H1 (cell line): ENCODE measurements at regions of chr2 and their contacts with region 1.

Region 1: GRCh38 chr2:127415593-127416505 is 2.4 kb upstream of the PROC start:
- DNase-seq: peak in 1 of 2 experiments; percentile 96
- H3K4me3 ChIP-seq: peak overlapping the region; percentile 13 to 58 (median 40); a peak in 7 of 8 replicates
- H3K27ac ChIP-seq: no peak overlapping the region
- H3K4me1 ChIP-seq: peaks cover 0 to 6% (median 0%) of the 10 kb centered on the region in 4 experiments; a peak in 2 of 7 replicates
- H3K27me3 ChIP-seq: peaks cover 1 to 33% (median 20%) of the 10 kb centered on the region in 4 experiments
- CTCF ChIP-seq: peak in 2 of 3 experiments; percentile 80 to 87; a peak in 3 of 4 replicates
- EP300 ChIP-seq: no peak
- POLR2A ChIP-seq: no peak
- RAD21 ChIP-seq: peak; percentile 72 to 76

Region 2: GRCh38 chr2:126678269-126679065 is 737.4 kb before region 1 on chr2:
- CTCF ChIA-PET with region 1: no interaction called
- POLR2A ChIA-PET with region 1: no interaction called
- DNase-seq: no peak
- H3K4me3 ChIP-seq: no peak overlapping the region
- H3K27ac ChIP-seq: no peak overlapping the region
- H3K4me1 ChIP-seq: no peaks in the 10 kb centered on the region
- H3K27me3 ChIP-seq: no peaks in the 10 kb centered on the region
- CTCF ChIP-seq: no peak
- EP300 ChIP-seq: no peak
- POLR2A ChIP-seq: no peak
- RAD21 ChIP-seq: no peak

Region 3: GRCh38 chr2:127072970-127073369 is 342.9 kb before region 1 on chr2:
- CTCF ChIA-PET with region 1: no interaction called
- POLR2A ChIA-PET with region 1: no interaction called
- DNase-seq: no peak
- H3K4me3 ChIP-seq: no peak overlapping the region
- H3K27ac ChIP-seq: no peak overlapping the region
- H3K4me1 ChIP-seq: no peaks in the 10 kb centered on the region; a peak in 2 of 7 replicates
- H3K27me3 ChIP-seq: no peaks in the 10 kb centered on the region
- CTCF ChIP-seq: no peak
- EP300 ChIP-seq: no peak
- POLR2A ChIP-seq: no peak
- RAD21 ChIP-seq: no peak

Region 4: DNA sequence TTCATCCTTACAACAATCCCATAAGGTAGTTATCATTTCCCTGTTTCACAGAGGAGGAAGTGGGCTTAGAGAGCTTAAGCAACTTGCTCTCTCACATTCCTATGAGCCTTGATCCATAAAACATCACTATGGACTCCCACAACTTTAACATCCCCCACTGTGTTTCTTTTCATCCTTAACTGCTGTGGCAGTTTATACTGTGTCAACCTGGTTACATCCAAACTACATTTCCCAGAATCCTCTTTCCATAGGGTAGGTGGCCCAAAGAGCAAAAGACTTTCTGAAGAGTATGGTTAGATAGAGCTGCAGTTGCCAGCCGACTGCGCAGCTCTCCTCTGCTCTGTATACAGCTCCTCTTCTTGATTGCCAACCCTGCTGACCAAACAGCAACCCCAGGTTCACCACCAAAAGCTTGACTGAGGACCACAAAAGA is 50.6 kb before region 1 on chr2:
- CTCF ChIA-PET with region 1: interaction called, 10 read pairs
- POLR2A ChIA-PET with region 1: no interaction called
- DNase-seq: no peak
- H3K4me3 ChIP-seq: no peak overlapping the region
- H3K27ac ChIP-seq: no peak overlapping the region
- H3K4me1 ChIP-seq: peaks cover 0 to 9% (median 5%) of the 10 kb centered on the region in 4 experiments; a peak in 4 of 7 replicates
- H3K27me3 ChIP-seq: no peaks in the 10 kb centered on the region
- CTCF ChIP-seq: no peak
- EP300 ChIP-seq: no peak
- POLR2A ChIP-seq: no peak
- RAD21 ChIP-seq: no peak

Region 5: DNA sequence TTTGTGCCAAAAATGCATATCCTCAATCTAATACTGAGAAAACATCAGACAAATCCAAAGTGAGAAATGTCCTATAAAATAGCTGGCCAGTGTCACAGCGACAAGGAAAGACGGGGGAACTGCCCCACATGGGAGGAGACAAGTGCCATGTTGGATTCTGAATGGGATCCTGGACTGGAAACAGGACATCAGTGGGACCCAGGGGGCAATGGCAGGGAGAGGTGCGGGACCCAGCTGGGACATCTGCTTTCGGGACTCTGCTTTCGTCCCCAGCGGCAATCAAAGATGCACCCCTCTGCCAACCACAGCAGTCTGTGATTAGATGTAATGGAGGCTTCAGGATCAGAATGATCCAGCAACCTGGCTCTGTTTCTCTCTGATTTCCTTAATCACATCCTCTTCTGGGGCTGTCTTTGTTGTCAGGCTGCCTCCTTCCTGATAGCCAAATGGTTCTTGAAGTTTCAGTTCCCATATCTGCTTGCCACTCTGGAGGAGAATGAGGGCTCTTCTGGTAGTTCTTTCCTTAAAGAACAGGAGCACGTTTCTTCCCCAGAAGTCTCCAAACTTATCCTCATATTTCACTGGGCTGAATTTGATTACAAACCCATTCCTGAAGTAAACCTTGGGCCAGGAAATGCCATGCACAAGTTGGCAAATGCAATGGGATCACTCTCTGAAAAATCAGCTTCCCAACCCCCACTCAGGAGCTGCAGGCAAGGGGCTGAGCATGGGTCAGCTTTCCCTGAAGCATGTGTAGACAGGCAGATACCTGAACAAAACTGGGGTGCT is 11.2 kb before region 1 on chr2:
- CTCF ChIA-PET with region 1: interaction called, 60 read pairs
- POLR2A ChIA-PET with region 1: interaction called, 4 read pairs
- DNase-seq: no peak
- H3K4me3 ChIP-seq: no peak overlapping the region
- H3K27ac ChIP-seq: no peak overlapping the region
- H3K4me1 ChIP-seq: peaks cover 0 to 8% (median 4%) of the 10 kb centered on the region in 4 experiments; a peak in 3 of 7 replicates
- H3K27me3 ChIP-seq: no peaks in the 10 kb centered on the region
- CTCF ChIP-seq: no peak
- EP300 ChIP-seq: no peak
- POLR2A ChIP-seq: no peak
- RAD21 ChIP-seq: no peak

Region 6: GRCh38 chr2:127437781-127438726 is 22.2 kb after region 1 on chr2:
- CTCF ChIA-PET with region 1: interaction called, 12 read pairs
- POLR2A ChIA-PET with region 1: no interaction called
- DNase-seq: peak in 1 of 2 experiments; percentile 45
- H3K4me3 ChIP-seq: no peak overlapping the region
- H3K27ac ChIP-seq: no peak overlapping the region
- H3K4me1 ChIP-seq: no peaks in the 10 kb centered on the region
- H3K27me3 ChIP-seq: no peaks in the 10 kb centered on the region
- CTCF ChIP-seq: no peak
- EP300 ChIP-seq: no peak
- POLR2A ChIP-seq: no peak
- RAD21 ChIP-seq: peak; percentile 8 to 27; a peak in 1 of 4 replicates

Region 7: GRCh38 chr2:127597984-127598380 is 182.1 kb after region 1 on chr2:
- CTCF ChIA-PET with region 1: no interaction called
- POLR2A ChIA-PET with region 1: no interaction called
- DNase-seq: no peak
- H3K4me3 ChIP-seq: no peak overlapping the region
- H3K27ac ChIP-seq: no peak overlapping the region
- H3K4me1 ChIP-seq: no peaks in the 10 kb centered on the region
- H3K27me3 ChIP-seq: peaks cover 0 to 2% (median 0%) of the 10 kb centered on the region in 4 experiments; a peak in 1 of 7 replicates
- CTCF ChIP-seq: no peak
- EP300 ChIP-seq: no peak
- POLR2A ChIP-seq: no peak
- RAD21 ChIP-seq: no peak

Region 8: GRCh38 chr2:127857265-127857808 is 441.5 kb after region 1 on chr2:
- CTCF ChIA-PET with region 1: no interaction called
- POLR2A ChIA-PET with region 1: no interaction called
- DNase-seq: no peak
- H3K4me3 ChIP-seq: peak overlapping the region; percentile 65 to 88 (median 81)
- H3K27ac ChIP-seq: no peak overlapping the region
- H3K4me1 ChIP-seq: peaks cover 3 to 10% (median 5%) of the 10 kb centered on the region in 4 experiments
- H3K27me3 ChIP-seq: no peaks in the 10 kb centered on the region
- CTCF ChIP-seq: no peak
- EP300 ChIP-seq: no peak
- POLR2A ChIP-seq: no peak
- RAD21 ChIP-seq: no peak